Activated CD4-positive, alpha-beta T cell treated with anti-CD3 and anti-CD28 coated beads, Interleukin-2, amount 10 ng/mL, durations not matched to agents 24 days and 14 days (primary cell): ENCODE measurements at regions of chr11 and their contacts with region 1.

Region 1: GRCh38 chr11:62591448-62592145 is at the start of gene TUT1:
- DNase-seq: peak; percentile 99
- H3K4me3 Mint-ChIP-seq: peak within 1 kb of the TSS; percentile 100
- H3K27ac Mint-ChIP-seq: peak within 1 kb of the TSS; percentile 99
- H3K4me1 Mint-ChIP-seq: peaks cover 38% of the 10 kb centered on the region
- H3K27me3 Mint-ChIP-seq: no peaks in the 10 kb centered on the region
- total RNA-seq, gene TUT1: 45.3 and 50.9 TPM in 2 replicates

Region 2: DNA sequence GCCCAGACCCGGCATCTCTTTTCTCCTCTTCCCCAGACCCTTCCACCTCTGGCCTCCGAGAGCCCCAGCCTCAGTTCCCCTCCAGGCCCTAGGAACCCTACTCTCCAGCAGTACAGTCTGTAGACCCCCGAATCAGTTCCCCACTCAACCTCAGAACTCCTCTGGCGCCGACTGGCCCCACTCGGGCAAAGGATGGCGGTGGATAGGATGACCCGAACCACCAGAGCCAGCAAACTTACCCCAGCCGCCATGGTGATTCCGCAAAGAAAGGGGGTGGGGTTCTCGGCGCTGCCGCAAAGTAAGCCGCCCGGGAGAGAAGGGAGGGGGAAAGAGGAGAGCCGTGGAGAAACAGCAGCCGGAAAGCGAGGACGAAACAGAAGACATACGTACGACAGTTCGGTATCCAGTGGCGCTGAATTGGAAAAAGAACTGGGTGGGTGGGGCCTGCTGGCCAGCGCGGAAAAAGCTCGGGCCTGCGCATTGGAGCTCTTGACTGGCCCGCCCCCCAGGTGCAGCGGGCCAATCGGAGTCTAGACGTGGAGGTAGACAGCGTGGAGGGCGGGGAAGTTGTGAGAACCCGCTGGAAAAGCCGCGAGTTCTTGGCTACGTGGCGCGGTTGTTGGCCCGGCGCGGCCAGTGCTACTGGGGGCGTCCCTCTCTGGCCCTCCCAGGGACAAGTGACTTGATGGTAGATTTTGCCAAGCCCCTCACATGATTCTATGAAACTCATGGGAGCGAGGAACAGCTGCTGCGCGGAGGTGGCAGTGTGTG is 17.8 kb before region 1 on chr11 and contains the start of gene EEF1G:
- intact Hi-C with region 1: loop called (anchors 1 kb)
- DNase-seq: peak; percentile 99
- H3K4me3 Mint-ChIP-seq: peak within 1 kb of the TSS; percentile 96
- H3K27ac Mint-ChIP-seq: peak within 1 kb of the TSS; percentile 96
- H3K4me1 Mint-ChIP-seq: peaks cover 37% of the 10 kb centered on the region
- H3K27me3 Mint-ChIP-seq: no peaks in the 10 kb centered on the region
- total RNA-seq, gene EEF1G: 1,271 and 1,309 TPM in 2 replicates

Region 3: DNA sequence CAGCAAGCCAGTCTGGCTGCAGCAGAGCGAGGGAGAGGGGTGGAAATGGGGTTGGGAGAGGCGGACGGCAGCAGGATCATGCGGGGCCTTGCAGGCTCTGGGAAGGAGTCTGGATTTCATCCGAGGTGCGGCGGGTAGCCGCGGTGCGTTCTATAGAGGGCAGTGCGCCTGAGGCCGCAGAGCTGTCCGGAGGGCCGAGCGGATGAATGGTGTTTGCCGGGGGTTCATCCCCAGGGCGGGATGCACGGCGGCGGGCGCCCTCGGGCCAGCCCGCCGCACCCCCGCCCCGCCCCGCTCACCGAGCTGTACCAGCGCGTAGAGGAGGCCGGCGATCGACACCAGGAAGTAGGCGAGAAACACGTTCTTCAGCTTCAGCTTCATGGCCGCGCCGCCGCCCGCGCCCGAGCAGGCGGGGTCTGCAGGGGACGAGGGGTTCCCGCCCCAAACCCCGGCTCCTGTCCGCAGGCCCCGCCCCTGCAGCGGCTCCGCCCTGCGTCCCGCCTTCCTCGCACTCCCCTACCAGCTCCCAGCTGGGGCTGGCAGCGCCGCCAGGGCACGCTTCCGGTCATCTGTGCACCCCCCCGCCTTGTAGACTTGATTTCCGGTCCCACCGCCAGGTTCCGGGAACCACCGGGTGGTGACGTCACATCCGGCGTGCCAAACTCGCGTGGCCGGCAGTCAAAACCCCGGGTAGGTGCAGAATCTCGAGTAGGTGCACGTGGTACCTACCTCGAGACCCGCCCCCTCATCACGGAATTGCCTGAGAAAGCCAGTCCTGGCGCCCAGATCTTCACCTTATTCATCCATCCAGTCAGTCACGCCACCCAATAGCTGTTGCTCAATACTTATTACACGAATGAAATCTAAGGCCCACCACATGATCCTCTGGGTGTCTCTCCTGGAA is 30.2 kb after region 1 on chr11 and contains the start of gene B3GAT3:
- intact Hi-C with region 1: loop called (anchors 1 kb)
- DNase-seq: peak; percentile 99
- H3K4me3 Mint-ChIP-seq: peak within 1 kb of the TSS; percentile 97
- H3K27ac Mint-ChIP-seq: peak within 1 kb of the TSS; percentile 99
- H3K4me1 Mint-ChIP-seq: peaks cover 25% of the 10 kb centered on the region
- H3K27me3 Mint-ChIP-seq: peaks cover 1% of the 10 kb centered on the region
- total RNA-seq, gene B3GAT3: 80.3 and 91.4 TPM in 2 replicates

Region 4: GRCh38 chr11:62665075-62665598 is 73.5 kb after region 1 on chr11 and contains the starts of genes C11orf98 and CSKMT:
- intact Hi-C with region 1: loop called (anchors 2 kb)
- DNase-seq: peak; percentile 99
- H3K4me3 Mint-ChIP-seq: peak within 1 kb of the TSS; percentile 98
- H3K27ac Mint-ChIP-seq: peak within 1 kb of the TSS; percentile 93
- H3K4me1 Mint-ChIP-seq: peaks cover 26% of the 10 kb centered on the region
- H3K27me3 Mint-ChIP-seq: no peaks in the 10 kb centered on the region
- total RNA-seq, gene C11orf98: 143 and 147 TPM in 2 replicates
- total RNA-seq, gene CSKMT: 59.5 and 60.9 TPM in 2 replicates

Region 5: GRCh38 chr11:62705880-62706849 is 114.6 kb after region 1 on chr11:
- intact Hi-C with region 1: loop called (anchors 1 kb)
- DNase-seq: peak; percentile 97
- H3K4me3 Mint-ChIP-seq: peak overlapping the region; percentile 96
- H3K27ac Mint-ChIP-seq: peak overlapping the region; percentile 89
- H3K4me1 Mint-ChIP-seq: peaks cover 33% of the 10 kb centered on the region
- H3K27me3 Mint-ChIP-seq: no peaks in the 10 kb centered on the region

Region 6: GRCh38 chr11:62771144-62772021 is 179.8 kb after region 1 on chr11 and contains the start of gene TAF6L:
- intact Hi-C with region 1: loop called (anchors 10 kb)
- DNase-seq: peak; percentile 98
- H3K4me3 Mint-ChIP-seq: peak within 1 kb of the TSS; percentile 93
- H3K27ac Mint-ChIP-seq: peak within 1 kb of the TSS; percentile 96
- H3K4me1 Mint-ChIP-seq: peaks cover 26% of the 10 kb centered on the region
- H3K27me3 Mint-ChIP-seq: no peaks in the 10 kb centered on the region
- total RNA-seq, gene TAF6L: 20.1 and 20.2 TPM in 2 replicates